Activated B cell treated with CpG ODN at 0.5 μM for 24 hours (primary cell): ENCODE measurements at regions of chr16 and their contacts with region 1.

Region 1: GRCh38 chr16:74998481-74999218 is at the start of gene ZNRF1:
- DNase-seq: peak; percentile 58
- ATAC-seq: peak; percentile 84
- H3K4me3 Mint-ChIP-seq: peak within 1 kb of the TSS; percentile 85
- H3K27ac Mint-ChIP-seq: peak within 1 kb of the TSS; percentile 59
- H3K4me1 Mint-ChIP-seq: peaks cover 18% of the 10 kb centered on the region
- H3K27me3 Mint-ChIP-seq: peaks cover 39% of the 10 kb centered on the region
- CTCF ChIP-seq: peak; percentile 22
- total RNA-seq, gene ZNRF1: 1.6 and 2.8 TPM in 2 replicates

Region 2: DNA sequence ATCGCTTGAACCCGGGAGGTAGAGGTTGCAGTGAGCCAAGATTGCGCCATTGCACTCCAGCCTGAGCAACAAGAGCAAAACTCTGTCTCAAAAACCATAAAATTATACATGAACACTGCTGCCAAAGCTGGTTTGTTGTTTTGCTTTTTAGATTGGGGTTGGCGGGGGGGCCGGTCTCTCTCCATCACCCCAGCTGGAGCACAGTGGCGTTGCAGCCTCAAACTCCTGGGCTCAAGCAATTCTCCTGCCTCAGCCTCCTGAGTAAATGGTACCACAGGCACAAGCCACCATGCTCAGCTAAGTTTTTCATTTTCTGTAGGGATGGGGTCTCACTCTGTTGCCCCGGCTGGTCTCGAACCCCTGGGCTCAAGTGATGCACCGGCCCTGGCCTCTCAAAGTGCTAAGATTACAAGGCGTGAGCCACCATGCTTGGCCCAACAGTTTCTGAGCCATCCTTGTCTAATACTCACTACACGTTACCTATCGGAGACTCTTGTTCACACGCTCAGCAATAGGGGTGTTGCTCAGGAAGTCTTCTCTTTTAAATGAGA is 25.4 kb before region 1 on chr16:
- CTCF ChIA-PET with region 1: no interaction called
- POLR2A ChIA-PET with region 1: no interaction called
- intact Hi-C with region 1: no loop called
- DNase-seq: no peak
- ATAC-seq: no peak
- H3K4me3 Mint-ChIP-seq: no peak overlapping the region
- H3K27ac Mint-ChIP-seq: no peak overlapping the region
- H3K4me1 Mint-ChIP-seq: peaks cover 13% of the 10 kb centered on the region
- H3K27me3 Mint-ChIP-seq: no peaks in the 10 kb centered on the region
- CTCF ChIP-seq: no peak

Region 3: DNA sequence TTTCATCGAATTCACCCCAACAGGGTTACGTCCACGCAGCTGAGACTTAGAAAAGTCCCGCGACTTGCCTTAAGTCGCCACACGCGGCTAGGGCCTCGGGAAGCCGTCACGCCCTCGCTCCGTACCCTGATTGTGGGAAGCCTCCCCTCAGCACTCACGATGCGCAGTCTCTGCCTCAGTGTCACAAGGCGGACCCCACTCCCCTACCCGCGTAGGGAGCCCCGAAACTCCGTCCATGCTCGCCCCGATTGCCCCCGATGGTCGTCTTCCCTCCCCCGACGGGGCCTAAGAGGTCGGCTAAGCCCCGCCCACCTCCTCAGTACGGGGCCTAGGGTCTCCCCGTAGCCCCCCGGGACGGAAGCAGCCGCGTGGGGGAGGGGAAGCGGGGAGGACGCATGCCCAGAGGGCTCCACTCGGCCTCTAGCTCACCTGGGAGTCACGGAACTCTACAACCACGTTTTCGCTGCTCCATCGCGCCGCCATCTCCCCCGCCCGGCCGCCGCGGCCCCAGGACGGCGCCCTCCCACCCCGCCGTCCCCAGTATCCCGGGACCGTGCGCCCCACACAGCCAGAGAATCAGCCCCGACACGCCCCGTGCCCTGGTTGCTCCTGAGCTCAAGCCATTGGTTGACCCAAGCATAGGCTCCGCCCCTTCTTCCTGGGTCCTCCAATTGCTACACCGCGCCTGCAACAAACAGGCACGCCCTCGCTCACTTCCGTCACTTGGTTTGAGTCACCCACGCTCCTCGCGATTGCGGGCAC is 13.9 kb before region 1 on chr16 and contains the start of gene WDR59:
- CTCF ChIA-PET with region 1: interaction called, 23 read pairs
- POLR2A ChIA-PET with region 1: interaction called, 4 read pairs
- intact Hi-C with region 1: loop called (anchors 1 kb)
- DNase-seq: peak; percentile 90
- ATAC-seq: peak; percentile 99
- H3K4me3 Mint-ChIP-seq: peak within 1 kb of the TSS; percentile 96
- H3K27ac Mint-ChIP-seq: peak within 1 kb of the TSS; percentile 88
- H3K4me1 Mint-ChIP-seq: peaks cover 20% of the 10 kb centered on the region
- H3K27me3 Mint-ChIP-seq: no peaks in the 10 kb centered on the region
- CTCF ChIP-seq: no peak
- total RNA-seq, gene WDR59: 80.8 and 93.3 TPM in 2 replicates

Region 4: GRCh38 chr16:75011634-75012307 is 13.1 kb after region 1 on chr16:
- CTCF ChIA-PET with region 1: interaction called, 10 read pairs
- POLR2A ChIA-PET with region 1: interaction called, 5 read pairs
- intact Hi-C with region 1: loop called (anchors 1 kb)
- DNase-seq: no peak
- ATAC-seq: peak; percentile 98
- H3K4me3 Mint-ChIP-seq: peak overlapping the region; percentile 62
- H3K27ac Mint-ChIP-seq: peak overlapping the region; percentile 74
- H3K4me1 Mint-ChIP-seq: peaks cover 18% of the 10 kb centered on the region
- H3K27me3 Mint-ChIP-seq: no peaks in the 10 kb centered on the region
- CTCF ChIP-seq: no peak

Region 5: GRCh38 chr16:75074920-75075687 is 76.5 kb after region 1 on chr16:
- CTCF ChIA-PET with region 1: no interaction called
- POLR2A ChIA-PET with region 1: no interaction called
- intact Hi-C with region 1: loop called (anchors 2 kb)
- DNase-seq: peak; percentile 37
- ATAC-seq: peak; percentile 95
- H3K4me3 Mint-ChIP-seq: peak overlapping the region; percentile 0
- H3K27ac Mint-ChIP-seq: peak overlapping the region; percentile 36
- H3K4me1 Mint-ChIP-seq: peaks cover 36% of the 10 kb centered on the region
- H3K27me3 Mint-ChIP-seq: peaks cover 24% of the 10 kb centered on the region
- CTCF ChIP-seq: no peak

Region 6: DNA sequence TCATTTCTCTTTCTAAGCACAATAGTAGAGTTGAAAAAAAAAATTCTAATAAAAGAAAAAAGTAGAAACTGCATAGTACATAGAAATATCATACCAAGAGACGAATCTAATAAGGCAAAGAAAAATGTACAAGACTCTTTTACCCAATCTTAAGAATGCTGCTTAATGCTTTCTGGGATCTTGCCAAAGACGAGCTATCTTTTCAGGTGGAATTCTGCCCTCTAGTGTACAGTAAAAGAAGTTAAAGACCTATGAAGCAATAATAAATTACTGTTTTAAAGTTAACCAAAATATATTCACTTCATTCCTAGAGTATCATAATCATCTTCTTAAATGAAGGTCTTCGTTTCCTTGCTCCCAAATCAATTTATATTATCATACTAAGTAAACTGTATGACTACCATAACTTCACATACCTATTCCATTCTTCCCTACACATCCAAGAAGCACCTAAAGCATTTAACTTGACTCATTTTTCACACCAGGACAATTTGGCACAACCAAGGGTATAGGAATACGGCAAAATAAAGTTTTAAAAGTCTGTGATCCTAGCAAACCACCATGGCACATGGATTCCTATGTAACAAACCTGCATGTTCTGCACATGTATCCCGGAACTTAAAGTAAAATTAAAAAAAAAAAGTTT is 387.0 kb after region 1 on chr16:
- CTCF ChIA-PET with region 1: no interaction called
- POLR2A ChIA-PET with region 1: no interaction called
- intact Hi-C with region 1: loop called (anchors 2 kb)
- DNase-seq: no peak
- ATAC-seq: peak; percentile 37
- H3K4me3 Mint-ChIP-seq: no peak overlapping the region
- H3K27ac Mint-ChIP-seq: no peak overlapping the region
- H3K4me1 Mint-ChIP-seq: peaks cover 9% of the 10 kb centered on the region
- H3K27me3 Mint-ChIP-seq: peaks cover 31% of the 10 kb centered on the region
- CTCF ChIP-seq: peak; percentile 51

Region 7: DNA sequence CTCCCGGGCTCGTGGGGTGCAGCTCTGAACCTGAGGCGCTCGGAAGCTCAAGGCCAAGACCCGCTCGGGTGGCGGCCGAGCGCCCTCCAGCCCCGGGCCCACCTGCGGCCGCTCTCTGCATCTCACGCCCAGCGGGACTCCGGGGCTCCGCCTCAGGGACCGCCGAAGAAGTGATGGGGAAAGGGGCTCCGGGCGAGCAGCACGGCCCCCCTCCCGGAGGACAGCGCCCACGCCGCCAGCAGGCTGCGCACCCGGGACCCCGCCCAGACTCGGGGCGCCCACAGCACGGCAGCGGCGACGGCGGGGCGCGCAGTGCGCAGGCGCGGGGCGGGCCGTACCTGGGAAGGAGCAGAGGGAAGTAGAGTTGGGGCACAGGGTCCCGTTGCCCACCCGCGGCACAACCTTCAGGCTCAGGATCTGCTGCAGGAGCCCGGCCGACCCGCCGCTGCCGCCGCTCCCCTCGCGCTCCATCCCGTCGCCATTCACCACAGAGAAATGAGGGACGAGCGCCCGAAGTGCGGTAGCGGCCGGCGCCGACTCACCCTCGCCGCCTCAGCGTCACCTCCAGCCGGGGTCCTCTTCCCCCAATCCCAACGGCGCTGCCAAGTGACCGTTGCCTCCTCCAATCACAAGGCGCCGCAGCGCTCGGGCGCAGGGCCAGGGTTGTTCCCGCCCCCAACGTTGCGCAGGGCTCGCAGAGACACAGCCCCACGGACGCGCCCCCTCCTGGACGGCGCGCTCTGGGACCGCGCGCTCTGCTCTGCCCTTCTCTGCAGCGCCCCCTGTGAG is 465.7 kb after region 1 on chr16 and contains the start of gene TMEM170A:
- CTCF ChIA-PET with region 1: no interaction called
- POLR2A ChIA-PET with region 1: no interaction called
- intact Hi-C with region 1: loop called (anchors 10 kb)
- DNase-seq: peak; percentile 98
- ATAC-seq: peak; percentile 95
- H3K4me3 Mint-ChIP-seq: peak within 1 kb of the TSS; percentile 92
- H3K27ac Mint-ChIP-seq: peak within 1 kb of the TSS; percentile 89
- H3K4me1 Mint-ChIP-seq: peaks cover 41% of the 10 kb centered on the region
- H3K27me3 Mint-ChIP-seq: no peaks in the 10 kb centered on the region
- CTCF ChIP-seq: peak; percentile 99
- total RNA-seq, gene TMEM170A: 25.3 and 28.3 TPM in 2 replicates